GM12878 (cell line): ENCODE measurements at regions of chr20 and their contacts with region 1.

Region 1: GRCh38 chr20:47508278-47508677 is 6.6 kb downstream of the NCOA3 start:
- DNase-seq: no peak
- ATAC-seq: peak; percentile 35; the same call in 2 of the 3 replicates
- H3K4me3 ChIP-seq: peak overlapping the region; percentile 75
- H3K27ac ChIP-seq: peak overlapping the region; percentile 68
- H3K4me1 ChIP-seq: peaks cover 26% of the 10 kb centered on the region
- H3K27me3 ChIP-seq: no peaks in the 10 kb centered on the region
- CTCF ChIP-seq: no peak
- EP300 ChIP-seq: no peak
- POLR2A ChIP-seq: no peak
- RAD21 ChIP-seq: no peak

Region 2: DNA sequence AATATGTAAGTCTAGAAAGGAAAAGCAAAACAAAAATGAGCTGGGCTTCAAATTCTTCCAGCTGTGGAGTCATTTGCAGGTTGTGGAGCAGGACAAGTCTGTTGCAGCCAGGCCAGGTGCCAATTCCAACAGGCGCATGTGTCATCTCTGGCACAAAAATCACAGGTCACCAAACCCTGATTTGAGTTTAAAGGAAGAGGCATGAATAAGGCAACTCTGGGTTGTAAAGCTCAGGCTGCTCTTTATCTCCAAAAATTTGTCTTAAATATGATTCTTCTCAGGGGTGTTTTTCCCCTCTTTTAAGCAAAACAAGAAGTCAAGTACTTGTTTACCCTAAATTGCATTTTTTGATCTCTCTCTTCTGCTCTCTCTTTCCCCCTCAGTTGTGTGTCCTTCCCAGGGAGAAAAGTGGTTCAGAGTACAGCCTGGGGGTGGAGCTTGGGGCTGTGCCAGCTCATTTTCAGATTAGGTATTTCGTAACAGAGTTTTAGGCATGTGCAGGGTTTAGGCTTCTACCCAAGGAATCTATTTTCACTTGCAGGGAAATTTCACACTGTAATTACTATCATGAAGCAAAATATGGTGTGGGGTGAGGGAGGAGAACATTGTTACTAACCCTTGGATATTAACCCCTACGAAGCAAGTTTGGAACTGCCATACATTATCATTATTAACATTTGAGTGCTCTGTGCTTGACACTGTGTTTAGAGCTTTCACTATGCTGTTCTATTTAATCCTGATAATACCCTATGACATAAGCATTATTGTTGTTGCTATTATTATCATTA is 14.9 kb before region 1 on chr20:
- CTCF ChIA-PET with region 1: interaction called, 17 read pairs
- POLR2A ChIA-PET with region 1: interaction called, 116 read pairs
- RAD21 ChIA-PET with region 1: interaction called, 90 read pairs
- SMC1A ChIA-PET with region 1: interaction called, 125 read pairs
- in situ Hi-C with region 1: no loop called
- intact Hi-C with region 1: no loop called
- DNase-seq: no peak
- ATAC-seq: peak; percentile 48
- H3K4me3 ChIP-seq: peak overlapping the region; percentile 19
- H3K27ac ChIP-seq: peak overlapping the region; percentile 82
- H3K4me1 ChIP-seq: peaks cover 81% of the 10 kb centered on the region
- H3K27me3 ChIP-seq: no peaks in the 10 kb centered on the region
- CTCF ChIP-seq: no peak
- EP300 ChIP-seq: no peak
- POLR2A ChIP-seq: no peak
- RAD21 ChIP-seq: no peak

Region 3: DNA sequence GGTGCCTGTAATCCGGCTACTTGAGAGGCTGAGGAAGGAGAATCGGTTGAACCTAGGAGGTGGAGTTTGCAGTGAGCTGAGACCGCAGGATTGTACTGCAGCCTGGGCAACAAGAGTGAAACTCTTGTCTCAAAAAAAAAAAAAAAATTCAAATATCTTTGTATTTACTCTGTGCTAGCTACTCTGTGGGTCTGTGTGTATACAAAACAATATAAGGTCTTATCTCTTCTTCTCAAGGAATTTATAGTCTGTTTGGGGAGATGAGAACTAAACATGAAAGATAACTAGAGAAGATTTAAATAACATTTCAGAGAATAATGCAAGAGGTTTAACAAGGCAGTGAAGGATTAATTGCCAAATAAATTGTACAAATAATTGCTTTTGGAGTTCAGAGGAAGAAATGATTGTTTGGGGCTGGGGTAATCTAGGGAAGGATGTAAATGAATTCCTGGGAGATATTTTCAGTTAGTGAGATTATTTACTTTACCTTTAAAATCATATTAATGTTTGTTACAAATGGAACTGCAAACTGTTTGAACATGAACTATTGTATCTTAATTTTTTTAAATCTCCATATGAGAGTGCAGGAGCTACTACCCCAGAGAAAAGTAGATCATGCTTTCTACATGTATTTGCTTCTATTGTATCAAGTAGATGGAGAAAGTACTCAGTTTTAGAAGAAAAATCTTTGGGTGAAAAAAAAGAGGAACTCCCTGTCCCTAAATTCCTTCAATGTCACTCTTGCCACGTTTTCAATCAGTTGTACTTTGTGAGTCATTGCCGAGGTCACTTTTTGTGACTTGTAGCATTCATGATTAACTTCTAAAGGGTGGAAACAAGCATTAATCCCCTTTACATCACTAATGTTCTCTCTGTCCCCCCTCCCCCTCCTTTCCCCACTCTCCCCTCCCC is 32.4 kb after region 1 on chr20:
- CTCF ChIA-PET with region 1: interaction called, 4 read pairs
- POLR2A ChIA-PET with region 1: interaction called, 6 read pairs
- RAD21 ChIA-PET with region 1: interaction called, 5 read pairs
- SMC1A ChIA-PET with region 1: interaction called, 13 read pairs
- in situ Hi-C with region 1: no loop called
- intact Hi-C with region 1: no loop called
- DNase-seq: peak; percentile 21
- ATAC-seq: peak; percentile 22; the same call in 2 of the 3 replicates
- H3K4me3 ChIP-seq: no peak overlapping the region
- H3K27ac ChIP-seq: no peak overlapping the region
- H3K4me1 ChIP-seq: peaks cover 35% of the 10 kb centered on the region
- H3K27me3 ChIP-seq: no peaks in the 10 kb centered on the region
- CTCF ChIP-seq: no peak
- EP300 ChIP-seq: no peak
- POLR2A ChIP-seq: no peak
- RAD21 ChIP-seq: no peak

Region 4: GRCh38 chr20:47561180-47561579 is 52.9 kb after region 1 on chr20:
- CTCF ChIA-PET with region 1: interaction called, 3 read pairs
- POLR2A ChIA-PET with region 1: interaction called, 3 read pairs
- RAD21 ChIA-PET with region 1: interaction called, 11 read pairs
- SMC1A ChIA-PET with region 1: interaction called, 18 read pairs
- in situ Hi-C with region 1: no loop called
- intact Hi-C with region 1: no loop called
- DNase-seq: no peak
- ATAC-seq: no peak; the same call in 2 of the 3 replicates
- H3K4me3 ChIP-seq: no peak overlapping the region
- H3K27ac ChIP-seq: no peak overlapping the region
- H3K4me1 ChIP-seq: peaks cover 37% of the 10 kb centered on the region
- H3K27me3 ChIP-seq: no peaks in the 10 kb centered on the region
- CTCF ChIP-seq: no peak
- EP300 ChIP-seq: no peak
- POLR2A ChIP-seq: no peak
- RAD21 ChIP-seq: no peak

Region 5: GRCh38 chr20:47568001-47568407 is 59.7 kb after region 1 on chr20:
- CTCF ChIA-PET with region 1: interaction called, 3 read pairs
- POLR2A ChIA-PET with region 1: interaction called, 3 read pairs
- RAD21 ChIA-PET with region 1: interaction called, 4 read pairs
- SMC1A ChIA-PET with region 1: interaction called, 18 read pairs
- in situ Hi-C with region 1: no loop called
- intact Hi-C with region 1: no loop called
- DNase-seq: no peak
- ATAC-seq: no peak
- H3K4me3 ChIP-seq: no peak overlapping the region
- H3K27ac ChIP-seq: no peak overlapping the region
- H3K4me1 ChIP-seq: peaks cover 24% of the 10 kb centered on the region
- H3K27me3 ChIP-seq: no peaks in the 10 kb centered on the region
- CTCF ChIP-seq: no peak
- EP300 ChIP-seq: no peak
- POLR2A ChIP-seq: no peak
- RAD21 ChIP-seq: no peak

Region 6: GRCh38 chr20:47576516-47577033 is 68.3 kb after region 1 on chr20:
- CTCF ChIA-PET with region 1: interaction called, 4 read pairs
- POLR2A ChIA-PET with region 1: interaction called, 5 read pairs
- RAD21 ChIA-PET with region 1: interaction called, 6 read pairs
- SMC1A ChIA-PET with region 1: interaction called, 26 read pairs
- in situ Hi-C with region 1: no loop called
- intact Hi-C with region 1: loop called (anchors 5 kb)
- DNase-seq: peak; percentile 46
- ATAC-seq: peak; percentile 85
- H3K4me3 ChIP-seq: peak overlapping the region; percentile 45
- H3K27ac ChIP-seq: peak overlapping the region; percentile 74
- H3K4me1 ChIP-seq: peaks cover 52% of the 10 kb centered on the region
- H3K27me3 ChIP-seq: no peaks in the 10 kb centered on the region
- CTCF ChIP-seq: no peak
- EP300 ChIP-seq: no peak
- POLR2A ChIP-seq: no peak
- RAD21 ChIP-seq: no peak

Region 7: GRCh38 chr20:47610247-47610944 is 102.1 kb after region 1 on chr20:
- CTCF ChIA-PET with region 1: interaction called, 17 read pairs
- POLR2A ChIA-PET with region 1: interaction called, 5 read pairs
- RAD21 ChIA-PET with region 1: interaction called, 18 read pairs
- SMC1A ChIA-PET with region 1: interaction called, 9 read pairs
- in situ Hi-C with region 1: no loop called
- intact Hi-C with region 1: no loop called
- DNase-seq: peak; percentile 33
- ATAC-seq: peak; percentile 94
- H3K4me3 ChIP-seq: no peak overlapping the region
- H3K27ac ChIP-seq: peak overlapping the region; percentile 18; the same call in 1 of the 2 replicates
- H3K4me1 ChIP-seq: peaks cover 6% of the 10 kb centered on the region
- H3K27me3 ChIP-seq: no peaks in the 10 kb centered on the region
- CTCF ChIP-seq: no peak
- EP300 ChIP-seq: no peak
- POLR2A ChIP-seq: no peak
- RAD21 ChIP-seq: no peak